ENCODE measurements at regions of chr5 and their contacts with region 1.

Region 1: GRCh38 chr5:172106511-172107356 is 81.3 kb downstream of the STK10 start:
- DNase-seq: peak in 9 of 10 donors; percentile 56 to 94 (median 75)

Region 2: GRCh38 chr5:171592737-171593136 is 514.0 kb before region 1 on chr5:
- intact Hi-C with region 1: no loop called
- DNase-seq: no peak

Region 3: DNA sequence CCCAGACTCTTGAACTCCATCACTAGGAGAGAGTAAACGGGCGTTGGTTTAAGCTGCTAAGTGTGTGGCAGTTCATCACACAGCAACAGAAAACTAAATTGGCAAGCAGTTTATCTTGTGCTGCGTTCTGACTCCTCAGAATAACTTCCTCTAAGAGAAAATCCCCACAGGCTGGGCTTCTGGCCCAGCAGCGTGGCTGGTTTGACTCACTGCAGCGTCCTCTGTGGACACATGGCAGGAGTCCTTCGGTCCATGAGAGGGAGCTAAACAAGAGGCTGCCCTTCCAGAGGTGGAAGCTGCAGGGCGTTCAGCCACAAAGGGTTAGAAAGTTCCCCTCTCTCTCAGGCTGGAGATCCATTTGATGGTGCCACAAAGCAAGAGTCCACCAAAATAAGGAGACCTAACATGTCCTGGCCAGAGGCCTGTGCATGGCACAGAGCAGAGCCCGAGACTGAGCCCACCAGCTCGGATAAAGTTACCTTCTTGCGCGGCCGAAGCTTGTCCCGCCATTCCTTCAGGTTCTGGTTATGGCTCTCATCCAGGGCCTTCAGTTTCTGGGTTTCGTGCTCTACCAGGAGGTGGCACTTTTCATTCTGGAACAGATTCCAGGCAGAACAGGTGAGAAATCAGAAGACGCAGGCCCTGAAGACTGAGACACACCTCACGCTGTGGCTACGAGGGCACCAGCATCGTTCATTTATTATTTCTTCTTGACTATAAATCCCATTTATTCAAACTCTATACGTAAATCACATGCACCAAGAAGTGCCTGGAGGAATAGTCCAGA is 54.1 kb before region 1 on chr5:
- intact Hi-C with region 1: loop called (anchors 5 kb)
- DNase-seq: peak in 5 of 10 donors; percentile 41 to 91 (median 59)

Region 4: GRCh38 chr5:172179361-172179989 is 72.7 kb after region 1 on chr5:
- intact Hi-C with region 1: no loop called
- DNase-seq: peak in 1 of 10 donors; percentile 5

Region 5: GRCh38 chr5:172283020-172283861 is 176.5 kb after region 1 on chr5 and contains the start of gene UBTD2:
- intact Hi-C with region 1: loop called (anchors 5 kb)
- DNase-seq: peak; percentile 47 to 95 (median 68)

Region 6: GRCh38 chr5:172705576-172706084 is 598.9 kb after region 1 on chr5:
- intact Hi-C with region 1: no loop called
- DNase-seq: no peak

Measured in posterior cingulate gyrus (tissue), 11 donors.